Activated CD4-positive, alpha-beta memory T cell treated with anti-CD3 and anti-CD28 coated beads, Interleukin-2, amount 10 ng/mL, durations not matched to agents 7 days and 5 days (primary cell): ENCODE measurements at regions of chr2 and their contacts with region 1.

Region 1: DNA sequence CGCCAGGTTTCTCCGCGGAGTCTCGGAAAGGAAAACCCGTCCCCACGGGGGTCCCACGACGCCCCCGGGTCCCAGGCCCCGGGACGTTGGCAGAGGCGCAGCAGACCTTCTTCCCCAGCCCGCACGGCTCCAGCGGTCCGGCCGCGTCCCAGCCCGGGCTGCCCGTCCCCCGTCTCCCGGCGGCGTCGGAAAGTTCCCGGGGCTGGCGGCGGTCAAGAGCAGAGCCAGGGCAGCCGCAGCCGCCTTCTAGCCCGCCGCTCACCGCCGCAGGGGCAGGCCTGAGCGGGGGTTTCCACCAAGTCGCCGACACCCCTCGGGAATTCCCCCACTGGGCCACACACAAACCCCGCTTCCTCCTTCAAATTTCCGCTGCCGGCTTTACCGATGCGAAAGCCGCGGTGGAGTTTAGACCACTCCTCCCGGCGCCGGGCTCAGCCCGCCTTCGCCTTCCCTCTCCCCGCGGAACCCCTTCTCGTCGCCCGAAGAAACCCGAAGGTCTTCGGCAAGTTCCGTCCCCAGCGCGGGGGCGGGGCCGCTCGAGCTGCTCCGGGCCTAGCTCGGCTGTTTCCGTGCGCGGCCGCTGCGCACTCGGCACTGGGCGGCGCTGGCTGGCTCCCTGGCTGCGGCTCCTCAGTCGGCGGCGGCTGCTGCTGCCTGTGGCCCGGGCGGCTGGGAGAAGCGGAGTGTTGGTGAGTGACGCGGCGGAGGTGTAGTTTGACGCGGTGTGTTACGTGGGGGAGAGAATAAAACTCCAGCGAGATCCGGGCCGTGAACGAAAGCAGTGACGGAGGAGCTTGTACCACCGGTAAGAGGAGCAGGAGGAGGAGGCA is at the start of gene CREB1:
- DNase-seq: peak; percentile 100
- H3K4me3 Mint-ChIP-seq: peak within 1 kb of the TSS; percentile 92
- H3K27ac Mint-ChIP-seq: peak within 1 kb of the TSS; percentile 99
- H3K4me1 Mint-ChIP-seq: peaks cover 60% of the 10 kb centered on the region
- H3K27me3 Mint-ChIP-seq: no peaks in the 10 kb centered on the region
- total RNA-seq, gene CREB1: 91.3 to 99.1 TPM

Region 2: DNA sequence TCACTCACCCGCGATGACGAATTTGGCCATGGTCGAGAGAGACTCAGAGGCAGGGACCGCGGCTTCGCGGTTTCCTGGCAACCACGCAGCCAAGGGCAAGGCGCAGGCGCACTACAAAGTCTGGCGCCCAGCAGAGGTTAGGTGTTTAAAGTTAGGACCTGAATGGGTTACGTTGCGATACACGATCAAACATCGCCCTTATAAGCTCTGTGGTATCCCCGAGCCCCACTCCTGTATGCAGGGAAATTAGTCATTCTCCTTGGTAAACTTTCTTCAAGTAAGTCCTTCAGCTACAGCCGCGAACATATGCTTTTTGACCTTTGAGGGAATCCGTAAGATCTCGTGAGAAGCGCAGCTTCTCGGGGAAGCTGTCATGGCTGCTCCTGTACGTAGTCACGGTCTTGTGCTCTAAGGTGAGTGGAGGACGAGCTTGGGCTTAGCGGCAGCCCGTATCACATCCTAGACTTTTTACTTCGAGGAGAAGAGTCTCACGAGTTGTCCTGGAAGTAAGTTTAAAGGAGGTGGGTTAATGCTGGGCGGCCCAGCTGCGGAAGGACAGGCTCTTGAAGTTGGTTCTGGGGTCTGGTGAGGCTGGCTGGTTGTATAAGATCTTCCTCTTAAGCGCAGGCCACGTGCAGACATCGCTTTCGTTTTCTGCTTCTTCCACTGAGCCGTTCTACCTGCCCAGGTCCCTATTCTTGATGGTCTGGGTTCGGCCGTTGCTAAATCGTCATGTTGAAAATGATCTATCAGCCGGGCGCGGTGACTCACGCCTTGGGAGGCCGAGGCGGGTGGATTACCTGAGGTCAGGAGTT is 764.1 kb before region 1 on chr2 and contains the starts of genes FASTKD2 and MDH1B:
- CTCF ChIA-PET with region 1: no interaction called
- POLR2A ChIA-PET with region 1: interaction called, 11 read pairs
- DNase-seq: peak; percentile 88
- H3K4me3 Mint-ChIP-seq: peak within 1 kb of the TSS; percentile 88
- H3K27ac Mint-ChIP-seq: peak within 1 kb of the TSS; percentile 89
- H3K4me1 Mint-ChIP-seq: peaks cover 34% of the 10 kb centered on the region
- H3K27me3 Mint-ChIP-seq: peaks cover 3% of the 10 kb centered on the region
- total RNA-seq, gene FASTKD2: 15.4 to 15.7 TPM
- total RNA-seq, gene MDH1B: 0.08 to 0.15 TPM

Region 3: DNA sequence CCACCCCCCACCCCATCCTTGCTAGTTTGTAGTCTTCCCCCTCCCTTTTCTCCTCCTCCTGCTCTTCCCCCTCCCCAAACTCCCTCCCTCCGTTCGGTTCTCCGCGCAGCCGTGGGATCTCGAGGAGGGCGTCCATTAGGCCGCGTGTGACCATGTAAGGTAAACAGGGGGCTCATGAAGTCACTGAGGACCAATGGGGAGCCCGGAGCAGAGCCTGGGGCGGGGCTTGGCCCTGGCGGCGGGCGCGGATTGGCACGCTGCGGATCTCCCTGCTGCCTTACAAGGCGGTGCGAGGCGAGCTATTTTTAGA is 363.6 kb before region 1 on chr2:
- CTCF ChIA-PET with region 1: no interaction called
- POLR2A ChIA-PET with region 1: interaction called, 46 read pairs
- DNase-seq: peak; percentile 98
- H3K4me3 Mint-ChIP-seq: peak overlapping the region; percentile 98
- H3K27ac Mint-ChIP-seq: peak overlapping the region; percentile 93
- H3K4me1 Mint-ChIP-seq: peaks cover 39% of the 10 kb centered on the region
- H3K27me3 Mint-ChIP-seq: peaks cover 9% of the 10 kb centered on the region

Region 4: DNA sequence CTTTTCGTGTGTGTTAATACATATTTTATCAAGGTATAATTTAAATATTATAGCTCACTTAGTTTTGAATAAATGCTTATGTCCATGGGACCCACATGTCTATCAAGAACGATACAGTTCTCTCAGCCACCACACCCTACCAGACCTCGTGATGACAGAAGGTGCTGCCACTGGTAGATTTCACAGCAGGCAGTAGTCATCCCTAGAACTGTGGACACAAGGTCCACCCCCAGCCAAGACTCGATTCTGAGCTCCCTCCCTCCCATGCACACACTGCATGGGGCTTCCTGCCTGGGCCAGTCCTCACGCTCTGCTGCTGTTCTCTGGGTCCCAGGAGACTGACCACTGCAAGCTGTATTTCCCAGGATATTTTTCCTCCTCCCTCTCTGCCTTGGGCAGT is 26.3 kb before region 1 on chr2:
- CTCF ChIA-PET with region 1: interaction called, 3 read pairs
- POLR2A ChIA-PET with region 1: interaction called, 49 read pairs
- DNase-seq: no peak
- H3K4me3 Mint-ChIP-seq: no peak overlapping the region
- H3K27ac Mint-ChIP-seq: no peak overlapping the region
- H3K4me1 Mint-ChIP-seq: peaks cover 68% of the 10 kb centered on the region
- H3K27me3 Mint-ChIP-seq: no peaks in the 10 kb centered on the region

Region 5: GRCh38 chr2:207558106-207558505 is 28.6 kb after region 1 on chr2:
- CTCF ChIA-PET with region 1: interaction called, 4 read pairs
- POLR2A ChIA-PET with region 1: interaction called, 11 read pairs
- DNase-seq: no peak
- H3K4me3 Mint-ChIP-seq: no peak overlapping the region
- H3K27ac Mint-ChIP-seq: no peak overlapping the region
- H3K4me1 Mint-ChIP-seq: peaks cover 6% of the 10 kb centered on the region
- H3K27me3 Mint-ChIP-seq: no peaks in the 10 kb centered on the region

Region 6: GRCh38 chr2:207769597-207770486 is 240.3 kb after region 1 on chr2 and contains the start of gene FZD5:
- CTCF ChIA-PET with region 1: no interaction called
- POLR2A ChIA-PET with region 1: no interaction called
- DNase-seq: peak; percentile 86
- H3K4me3 Mint-ChIP-seq: peak within 1 kb of the TSS; percentile 78
- H3K27ac Mint-ChIP-seq: no peak within 1 kb of the TSS
- H3K4me1 Mint-ChIP-seq: peaks cover 29% of the 10 kb centered on the region
- H3K27me3 Mint-ChIP-seq: peaks cover 58% of the 10 kb centered on the region
- total RNA-seq, gene FZD5: 0.40 to 0.55 TPM